ENCODE measurements at regions of chr6 and their contacts with region 1.

Region 1: DNA sequence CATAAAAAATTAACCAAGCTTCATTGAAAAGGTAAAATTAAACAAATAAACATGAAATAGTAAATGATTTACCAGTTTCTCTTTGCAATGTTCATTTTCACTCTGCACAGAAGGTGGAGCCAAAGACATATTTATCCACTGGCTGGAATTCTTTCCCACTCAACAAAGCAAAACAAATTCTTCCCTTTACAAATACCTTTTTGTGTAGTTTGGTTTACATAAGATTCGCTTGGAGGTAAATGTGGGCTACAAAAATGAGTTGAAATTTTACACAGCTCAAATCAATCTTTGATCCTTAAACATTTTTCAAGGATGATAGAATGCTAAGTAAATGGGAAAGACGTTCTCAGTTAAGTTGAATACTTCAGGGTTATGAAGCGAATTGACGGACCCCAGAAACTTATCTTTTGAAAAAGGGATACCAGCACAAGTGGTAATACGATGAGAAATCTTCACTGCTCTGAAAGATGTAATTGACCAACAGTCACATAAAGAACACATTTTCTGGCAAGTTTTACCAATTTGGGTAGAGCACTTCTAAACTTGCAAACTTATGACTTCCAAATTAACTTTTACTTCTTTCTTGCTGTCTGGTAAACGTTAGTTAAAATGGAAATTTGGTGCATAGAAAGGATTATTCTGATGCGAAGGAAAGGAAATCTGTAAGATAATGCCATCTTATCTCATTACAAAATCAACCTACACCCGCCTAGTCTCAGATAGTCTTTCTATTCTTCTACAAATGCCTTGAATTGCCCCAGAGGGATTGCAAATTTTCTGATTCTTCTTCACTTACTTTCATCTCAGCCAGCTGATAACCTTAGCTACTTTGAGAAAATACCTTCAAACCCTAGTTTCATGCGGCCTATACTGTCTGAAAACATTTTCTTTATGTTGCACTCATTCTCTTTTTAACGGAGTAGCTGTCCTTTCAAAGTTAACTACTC is 4.7 kb upstream of the GJA1 start:
- DNase-seq: peak; percentile 55
- ATAC-seq: no peak
- H3K4me3 ChIP-seq: no peak overlapping the region
- H3K27ac ChIP-seq: no peak overlapping the region
- H3K4me1 ChIP-seq: no peaks in the 10 kb centered on the region
- H3K27me3 ChIP-seq: 0 out of 2 replicates have a peak, but pooled peaks cover 4% of the 10 kb centered on the region
- CTCF ChIP-seq: peak; percentile 79

Region 2: GRCh38 chr6:121460170-121460569 is 29.4 kb after region 1 on chr6:
- CTCF ChIA-PET with region 1: no interaction called
- POLR2A ChIA-PET with region 1: no interaction called
- intact Hi-C with region 1: no loop called
- DNase-seq: no peak
- ATAC-seq: no peak
- H3K4me3 ChIP-seq: no peak overlapping the region
- H3K27ac ChIP-seq: no peak overlapping the region
- H3K4me1 ChIP-seq: no peaks in the 10 kb centered on the region
- H3K27me3 ChIP-seq: no peaks in the 10 kb centered on the region
- CTCF ChIP-seq: no peak

Region 3: DNA sequence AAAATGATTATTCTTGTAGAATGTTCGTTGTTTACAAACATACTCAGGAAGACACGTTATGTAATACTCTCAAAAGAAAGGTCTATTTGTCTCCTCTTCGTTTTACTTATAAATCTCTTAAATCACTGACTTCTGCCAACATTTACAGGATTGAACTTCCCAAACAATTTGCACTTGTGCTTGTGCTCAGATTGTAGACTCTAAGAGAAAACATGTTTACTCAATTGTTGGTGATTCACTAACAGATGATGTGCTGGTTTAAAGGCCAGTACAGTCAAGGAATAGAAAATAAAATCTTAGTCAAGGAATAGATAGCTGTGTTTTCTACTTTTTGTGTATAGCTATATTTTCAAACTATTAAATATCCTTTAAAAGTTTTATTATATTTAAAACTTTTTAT is 177.5 kb after region 1 on chr6:
- CTCF ChIA-PET with region 1: no interaction called
- POLR2A ChIA-PET with region 1: no interaction called
- intact Hi-C with region 1: loop called (anchors 10 kb)
- DNase-seq: no peak
- ATAC-seq: peak; percentile 64
- H3K4me3 ChIP-seq: no peak overlapping the region
- H3K27ac ChIP-seq: no peak overlapping the region
- H3K4me1 ChIP-seq: no peaks in the 10 kb centered on the region
- H3K27me3 ChIP-seq: no peaks in the 10 kb centered on the region
- CTCF ChIP-seq: no peak

Region 4: GRCh38 chr6:121647905-121648304 is 217.1 kb after region 1 on chr6:
- CTCF ChIA-PET with region 1: no interaction called
- POLR2A ChIA-PET with region 1: no interaction called
- intact Hi-C with region 1: no loop called
- DNase-seq: no peak
- ATAC-seq: no peak
- H3K4me3 ChIP-seq: no peak overlapping the region
- H3K27ac ChIP-seq: no peak overlapping the region
- H3K4me1 ChIP-seq: peaks cover 13% of the 10 kb centered on the region
- H3K27me3 ChIP-seq: no peaks in the 10 kb centered on the region
- CTCF ChIP-seq: no peak

Region 5: DNA sequence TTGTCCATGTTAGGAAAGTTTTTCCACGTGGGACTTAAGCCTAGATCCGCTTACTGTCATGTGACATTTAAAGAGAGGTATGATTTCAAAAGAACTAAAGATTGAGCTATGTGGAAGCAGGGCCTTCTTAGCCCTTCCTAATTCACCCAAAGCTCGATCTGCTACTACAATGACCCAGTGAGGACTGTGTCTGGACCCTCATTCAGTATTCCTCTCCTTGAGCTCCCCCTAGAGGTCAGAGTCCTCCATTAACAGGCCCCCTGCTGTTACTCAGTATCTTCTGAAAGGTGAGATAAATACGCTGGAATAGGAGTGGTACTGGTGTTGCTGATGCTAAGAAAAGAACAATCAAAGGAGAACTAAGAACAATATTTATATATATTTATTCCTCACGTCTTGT is 418.7 kb after region 1 on chr6:
- CTCF ChIA-PET with region 1: no interaction called
- POLR2A ChIA-PET with region 1: no interaction called
- intact Hi-C with region 1: loop called (anchors 1 kb)
- DNase-seq: peak; percentile 79
- ATAC-seq: peak; percentile 65
- H3K4me3 ChIP-seq: no peak overlapping the region
- H3K27ac ChIP-seq: no peak overlapping the region
- H3K4me1 ChIP-seq: no peaks in the 10 kb centered on the region
- H3K27me3 ChIP-seq: no peaks in the 10 kb centered on the region
- CTCF ChIP-seq: peak; percentile 80

Region 6: GRCh38 chr6:122033539-122034181 is 602.9 kb after region 1 on chr6:
- CTCF ChIA-PET with region 1: no interaction called
- POLR2A ChIA-PET with region 1: no interaction called
- intact Hi-C with region 1: loop called (anchors 1 kb)
- DNase-seq: peak; percentile 60
- ATAC-seq: peak; percentile 65
- H3K4me3 ChIP-seq: no peak overlapping the region
- H3K27ac ChIP-seq: no peak overlapping the region
- H3K4me1 ChIP-seq: no peaks in the 10 kb centered on the region
- H3K27me3 ChIP-seq: no peaks in the 10 kb centered on the region
- CTCF ChIP-seq: peak; percentile 64

Region 7: GRCh38 chr6:122184401-122184827 is 753.6 kb after region 1 on chr6:
- CTCF ChIA-PET with region 1: no interaction called
- POLR2A ChIA-PET with region 1: no interaction called
- intact Hi-C with region 1: loop called (anchors 10 kb)
- DNase-seq: peak; percentile 19
- ATAC-seq: no peak; the same call in 1 of the 2 replicates
- H3K4me3 ChIP-seq: no peak overlapping the region
- H3K27ac ChIP-seq: no peak overlapping the region
- H3K4me1 ChIP-seq: no peaks in the 10 kb centered on the region
- H3K27me3 ChIP-seq: peaks cover 29% of the 10 kb centered on the region; the same call in 1 of the 2 replicates
- CTCF ChIP-seq: peak; percentile 48

Region 8: DNA sequence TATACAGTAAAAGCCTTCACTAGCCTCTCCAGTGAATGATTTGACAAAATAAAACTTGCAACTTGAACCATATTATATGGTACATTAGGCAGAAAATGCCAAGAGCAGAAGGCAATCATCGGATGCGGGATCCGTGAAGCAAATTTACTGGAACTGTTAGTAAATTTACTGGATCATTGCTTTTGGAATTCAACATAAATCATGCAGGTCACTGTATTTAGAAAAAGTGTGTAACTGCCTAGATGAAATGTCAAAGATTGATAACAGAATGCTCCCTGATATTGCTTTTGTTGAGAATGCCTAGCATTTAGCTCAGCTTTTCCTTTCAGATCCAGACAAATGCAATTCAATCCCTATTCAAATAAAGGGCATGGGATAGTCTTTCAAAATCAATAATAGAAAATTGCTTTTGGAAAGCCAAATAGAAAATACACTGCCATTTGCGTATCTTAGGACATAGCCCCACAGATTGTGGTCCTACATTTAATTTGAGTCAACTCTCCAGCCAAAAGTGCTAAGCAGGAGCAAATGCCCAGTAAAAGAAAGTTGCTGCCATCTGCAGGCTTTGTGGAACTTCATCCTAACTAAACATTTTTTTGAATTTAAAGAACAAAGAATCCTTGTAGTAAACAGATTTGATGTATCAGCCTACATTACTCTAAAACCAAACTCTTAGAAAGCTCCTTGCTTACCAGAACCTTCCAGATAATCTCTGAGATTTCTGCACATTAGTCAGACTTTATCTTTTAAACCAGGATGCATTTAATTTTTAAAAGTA is 859.2 kb after region 1 on chr6:
- CTCF ChIA-PET with region 1: no interaction called
- POLR2A ChIA-PET with region 1: no interaction called
- intact Hi-C with region 1: loop called (anchors 5 kb)
- DNase-seq: peak; percentile 30
- ATAC-seq: no peak
- H3K4me3 ChIP-seq: no peak overlapping the region
- H3K27ac ChIP-seq: no peak overlapping the region
- H3K4me1 ChIP-seq: no peaks in the 10 kb centered on the region
- H3K27me3 ChIP-seq: peaks cover 40% of the 10 kb centered on the region
- CTCF ChIP-seq: peak; percentile 44; the same call in 1 of the 2 replicates

Measured in PC-3 (cell line).